HepG2 (cell line): ENCODE measurements at regions of chr3 and their contacts with region 1.

Region 1: GRCh38 chr3:72973031-72973723 is 23.4 kb upstream of the PPP4R2 start:
- DNase-seq: peak; percentile 77
- ATAC-seq: peak; percentile 79
- H3K4me3 ChIP-seq: no peak overlapping the region
- H3K27ac ChIP-seq: peak overlapping the region; percentile 76
- H3K4me1 ChIP-seq: peaks cover 52% of the 10 kb centered on the region
- H3K27me3 ChIP-seq: no peaks in the 10 kb centered on the region
- CTCF ChIP-seq: no peak; the same call in 1 of the 2 replicates
- EP300 ChIP-seq: peak; percentile 43 to 80; a peak in 3 of 4 replicates
- POLR2A ChIP-seq: no peak
- RAD21 ChIP-seq: no peak

Region 2: DNA sequence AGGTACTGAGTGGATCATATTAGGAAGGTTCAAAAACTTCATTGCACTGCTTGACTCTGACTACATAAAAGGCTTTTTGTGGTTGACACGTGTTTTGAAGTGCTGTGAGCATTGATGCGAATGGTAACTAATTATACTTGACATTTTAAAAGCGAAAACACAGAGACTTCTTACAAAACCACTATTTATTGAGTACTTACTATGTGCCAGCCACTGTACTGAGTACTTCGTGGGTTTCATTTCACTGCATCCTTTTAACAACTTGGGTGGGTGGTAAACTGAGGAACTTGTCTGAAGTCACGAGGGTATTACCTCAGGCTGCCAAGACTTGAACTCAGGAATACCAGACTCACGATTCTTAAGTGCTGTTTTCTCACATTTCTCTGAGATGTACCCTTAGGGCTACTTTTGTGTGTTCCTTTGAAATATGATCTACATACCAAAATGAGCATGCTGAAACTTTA is 21.9 kb before region 1 on chr3:
- CTCF ChIA-PET with region 1: no interaction called
- POLR2A ChIA-PET with region 1: interaction called, 17 read pairs
- in situ Hi-C with region 1: no loop called
- intact Hi-C with region 1: no loop called
- DNase-seq: no peak
- ATAC-seq: no peak
- H3K4me3 ChIP-seq: no peak overlapping the region
- H3K27ac ChIP-seq: peak overlapping the region; percentile 82
- H3K4me1 ChIP-seq: peaks cover 88% of the 10 kb centered on the region
- H3K27me3 ChIP-seq: no peaks in the 10 kb centered on the region
- CTCF ChIP-seq: no peak
- EP300 ChIP-seq: no peak
- POLR2A ChIP-seq: no peak
- RAD21 ChIP-seq: no peak